ENCODE measurements at regions of chr6 and their contacts with region 1.

Region 1: GRCh38 chr6:52284460-52285176 is at the start of gene MCM3:
- DNase-seq: peak; percentile 98
- H3K4me3 ChIP-seq: peak within 1 kb of the TSS; percentile 57 to 97 (median 73)
- H3K27ac ChIP-seq: peak within 1 kb of the TSS; percentile 73 to 90 (median 82)
- H3K4me1 ChIP-seq: peaks cover 5 to 35% (median 17%) of the 10 kb centered on the region in 4 donors
- H3K27me3 ChIP-seq: no peaks in the 10 kb centered on the region
- CTCF ChIP-seq: peak in 3 of 5 experiments; percentile 5 to 57 (median 47)
- EP300 ChIP-seq: no peak
- POLR2A ChIP-seq: peak; percentile 29
- total RNA-seq, gene MCM3: 13.5 to 27.3 (median 24.2) TPM

Region 2: DNA sequence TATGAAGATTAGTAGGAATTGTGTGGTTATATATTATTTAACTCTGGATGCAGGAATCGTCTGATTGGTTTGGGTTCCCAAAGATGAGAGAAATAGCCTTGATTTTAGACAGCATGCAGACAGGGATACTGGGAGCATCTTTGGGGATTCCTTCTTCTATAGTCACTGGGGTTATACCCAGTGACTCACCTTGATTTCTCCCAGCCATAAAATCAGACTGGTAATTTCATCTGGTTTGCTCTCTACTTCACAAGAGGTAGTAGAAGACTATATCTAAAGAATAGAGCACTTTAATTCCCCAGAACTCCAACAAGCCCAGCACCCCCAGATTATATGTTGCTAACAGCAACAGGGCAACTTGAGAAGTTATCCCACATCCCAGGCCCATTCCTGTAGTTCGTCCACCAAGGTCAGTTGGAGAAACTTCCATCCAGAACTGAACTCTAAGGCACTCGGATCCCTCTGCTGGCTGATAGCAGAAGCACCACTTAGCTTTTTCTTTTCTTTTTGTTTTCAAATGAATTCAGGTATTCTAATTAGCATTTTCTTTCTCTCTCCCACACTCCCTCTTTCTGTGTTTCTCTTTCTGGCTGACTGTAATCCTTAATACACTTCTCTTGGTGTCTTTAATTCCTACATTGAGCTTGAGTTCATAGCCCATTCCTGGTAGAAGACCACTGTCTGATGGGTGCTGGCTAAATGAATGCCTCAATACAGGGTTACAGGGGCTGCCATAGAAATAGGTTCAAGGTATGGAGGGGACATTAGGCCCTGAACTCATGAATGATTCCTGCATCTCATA is 115.1 kb after region 1 on chr6:
- in situ Hi-C with region 1: loop called in 2 of 4 experiments (anchors 5 to 25 kb)
- intact Hi-C with region 1: loop called (anchors 2 kb)
- DNase-seq: peak; percentile 42
- H3K4me3 ChIP-seq: no peak overlapping the region
- H3K27ac ChIP-seq: peak overlapping the region; percentile 23 to 68 (median 57)
- H3K4me1 ChIP-seq: peaks cover 0 to 64% (median 30%) of the 10 kb centered on the region in 4 donors
- H3K27me3 ChIP-seq: no peaks in the 10 kb centered on the region
- CTCF ChIP-seq: peak; percentile 79 to 91 (median 82)
- EP300 ChIP-seq: no peak
- POLR2A ChIP-seq: no peak

Region 3: GRCh38 chr6:52577022-52577777 is 292.6 kb after region 1 on chr6 and contains the start of gene TRAM2:
- in situ Hi-C with region 1: loop called in 1 of 4 experiments (anchors 25 kb)
- intact Hi-C with region 1: no loop called
- DNase-seq: peak; percentile 89
- H3K4me3 ChIP-seq: peak within 1 kb of the TSS; percentile 65 to 82 (median 78)
- H3K27ac ChIP-seq: peak within 1 kb of the TSS; percentile 97 to 98 (median 98)
- H3K4me1 ChIP-seq: peaks cover 19 to 50% (median 40%) of the 10 kb centered on the region in 4 donors
- H3K27me3 ChIP-seq: no peaks in the 10 kb centered on the region
- CTCF ChIP-seq: peak in 1 of 5 experiments; percentile 30
- EP300 ChIP-seq: no peak
- POLR2A ChIP-seq: peak; percentile 71
- total RNA-seq, gene TRAM2: 8.4 to 15.4 (median 11.7) TPM

Region 4: GRCh38 chr6:52650941-52651340 is 366.3 kb after region 1 on chr6:
- in situ Hi-C with region 1: loop called in 2 of 4 experiments (anchors 25 kb)
- intact Hi-C with region 1: loop called (anchors 10 kb)
- DNase-seq: no peak
- H3K4me3 ChIP-seq: no peak overlapping the region
- H3K27ac ChIP-seq: no peak overlapping the region
- H3K4me1 ChIP-seq: peaks cover 0 to 5% (median 0%) of the 10 kb centered on the region in 4 donors
- H3K27me3 ChIP-seq: peaks cover 3% of the 10 kb centered on the region
- CTCF ChIP-seq: no peak
- EP300 ChIP-seq: no peak
- POLR2A ChIP-seq: no peak

Region 5: GRCh38 chr6:52788478-52788877 is 503.9 kb after region 1 on chr6:
- in situ Hi-C with region 1: no loop called
- intact Hi-C with region 1: no loop called
- DNase-seq: no peak
- H3K4me3 ChIP-seq: no peak overlapping the region
- H3K27ac ChIP-seq: peak overlapping the region in 1 of 4 donors; percentile 20
- H3K4me1 ChIP-seq: no peaks in the 10 kb centered on the region
- H3K27me3 ChIP-seq: no peaks in the 10 kb centered on the region
- CTCF ChIP-seq: no peak
- EP300 ChIP-seq: no peak
- POLR2A ChIP-seq: no peak

Measured in transverse colon (tissue), 4 donors.